Breast epithelium (tissue), 4 donors: ENCODE measurements at regions of chr1 and their contacts with region 1.

Region 1: GRCh38 chr1:77120950-77121349 is 98.3 kb downstream of the PIGK start:
- DNase-seq: no peak
- H3K4me3 ChIP-seq: no peak overlapping the region
- H3K27ac ChIP-seq: no peak overlapping the region
- H3K4me1 ChIP-seq: no peaks in the 10 kb centered on the region
- H3K27me3 ChIP-seq: no peaks in the 10 kb centered on the region
- CTCF ChIP-seq: no peak
- POLR2A ChIP-seq: no peak

Region 2: GRCh38 chr1:75908717-75909152 is 1212.2 kb before region 1 on chr1:
- intact Hi-C with region 1: loop called (anchors 5 kb)
- DNase-seq: no peak
- H3K4me3 ChIP-seq: no peak overlapping the region
- H3K27ac ChIP-seq: no peak overlapping the region
- H3K4me1 ChIP-seq: no peaks in the 10 kb centered on the region
- H3K27me3 ChIP-seq: no peaks in the 10 kb centered on the region
- CTCF ChIP-seq: no peak
- POLR2A ChIP-seq: no peak

Region 3: DNA sequence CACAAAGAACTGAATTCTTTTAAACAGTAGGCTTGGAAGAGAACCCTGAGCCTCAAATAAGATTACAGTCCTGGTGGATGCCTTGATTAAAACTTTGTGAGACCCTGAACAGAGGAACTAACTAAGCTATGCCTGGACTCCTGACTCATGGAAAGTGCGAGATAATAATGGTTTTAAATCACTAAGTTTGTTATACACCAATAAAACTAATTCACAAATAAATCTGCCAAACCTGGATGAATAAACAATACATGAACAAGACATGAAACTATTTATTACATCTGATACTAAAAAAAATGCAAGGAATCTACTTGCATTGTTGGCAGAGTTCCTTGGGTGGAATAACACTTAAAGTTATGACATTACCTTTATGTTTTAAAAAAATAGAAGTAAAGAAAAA is 20.1 kb before region 1 on chr1:
- intact Hi-C with region 1: no loop called
- DNase-seq: no peak
- H3K4me3 ChIP-seq: no peak overlapping the region
- H3K27ac ChIP-seq: no peak overlapping the region
- H3K4me1 ChIP-seq: no peaks in the 10 kb centered on the region
- H3K27me3 ChIP-seq: no peaks in the 10 kb centered on the region
- CTCF ChIP-seq: no peak
- POLR2A ChIP-seq: no peak